MCF 10A (cell line): ENCODE measurements at regions of chr17 and their contacts with region 1.

Region 1: DNA sequence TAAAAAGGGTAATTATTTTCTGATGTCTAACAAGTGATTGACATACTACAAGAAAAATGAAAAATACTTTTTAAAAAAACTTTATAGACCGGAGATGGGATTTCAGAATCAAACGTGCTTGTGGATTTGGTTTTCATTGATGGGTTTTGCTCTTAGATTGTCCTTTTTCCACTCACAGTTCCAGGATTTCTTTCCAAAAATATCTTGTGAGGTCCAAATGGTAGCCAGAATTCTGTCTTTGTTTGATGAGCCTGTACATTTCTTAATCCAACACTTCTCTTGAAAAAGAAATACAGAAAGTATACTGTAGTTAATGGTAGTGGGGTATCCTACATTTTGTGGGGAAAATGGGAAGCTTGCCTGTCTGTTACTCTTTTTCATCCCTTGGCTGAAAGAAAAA is 329.3 kb downstream of the KCNJ2 start:
- DNase-seq: no peak
- H3K4me3 Mint-ChIP-seq: no peak overlapping the region
- H3K27ac Mint-ChIP-seq: no peak overlapping the region
- H3K4me1 Mint-ChIP-seq: no peaks in the 10 kb centered on the region
- H3K27me3 Mint-ChIP-seq: no peaks in the 10 kb centered on the region
- CTCF ChIP-seq: no peak

Region 2: GRCh38 chr17:70539132-70539924 is 40.7 kb after region 1 on chr17:
- CTCF ChIA-PET with region 1: no interaction called
- POLR2A ChIA-PET with region 1: no interaction called
- intact Hi-C with region 1: loop called (anchors 1 kb)
- DNase-seq: no peak
- H3K4me3 Mint-ChIP-seq: no peak overlapping the region
- H3K27ac Mint-ChIP-seq: no peak overlapping the region
- H3K4me1 Mint-ChIP-seq: no peaks in the 10 kb centered on the region
- H3K27me3 Mint-ChIP-seq: no peaks in the 10 kb centered on the region
- CTCF ChIP-seq: no peak